Posterior vena cava (tissue), 2 donors: ENCODE measurements at regions of chr1 and their contacts with region 1.

Region 1: DNA sequence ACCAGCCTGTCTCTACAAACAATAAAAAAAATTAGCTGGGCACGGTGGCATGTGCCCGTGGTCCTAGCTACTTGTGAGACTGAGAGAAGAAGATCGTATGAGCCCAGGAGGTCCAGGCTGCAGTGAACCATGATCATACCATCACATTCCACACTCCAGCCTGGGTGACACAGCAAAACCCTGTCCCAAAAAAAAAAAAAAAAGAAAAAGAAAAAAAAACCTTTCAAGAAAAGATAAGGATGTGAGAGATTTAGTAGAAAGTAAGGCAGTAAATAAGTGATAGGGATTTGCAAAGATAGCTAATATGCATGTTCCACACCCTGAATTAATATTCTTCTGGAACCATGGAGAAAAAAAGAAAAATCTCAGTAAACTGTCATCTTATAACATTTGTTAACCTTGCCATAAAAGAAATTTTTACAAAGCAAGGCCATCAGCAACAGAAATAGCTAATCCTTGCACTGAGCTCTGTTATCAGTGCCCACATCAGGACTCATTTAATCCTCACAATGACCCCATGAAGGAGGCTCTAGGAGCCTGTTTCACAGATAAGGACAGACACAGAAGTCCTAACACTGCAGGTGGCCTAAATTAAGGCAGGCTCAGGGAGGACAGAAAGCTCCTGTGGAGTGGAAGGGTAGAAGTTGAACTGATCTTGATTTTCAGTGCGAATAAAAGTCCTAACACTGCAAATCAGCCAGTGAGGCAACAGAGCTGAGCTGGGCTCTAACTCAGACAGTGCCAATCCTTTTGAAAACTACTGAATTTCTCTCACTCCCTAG is 7.6 kb downstream of the GNB1 start:
- DNase-seq: no peak

Region 2: DNA sequence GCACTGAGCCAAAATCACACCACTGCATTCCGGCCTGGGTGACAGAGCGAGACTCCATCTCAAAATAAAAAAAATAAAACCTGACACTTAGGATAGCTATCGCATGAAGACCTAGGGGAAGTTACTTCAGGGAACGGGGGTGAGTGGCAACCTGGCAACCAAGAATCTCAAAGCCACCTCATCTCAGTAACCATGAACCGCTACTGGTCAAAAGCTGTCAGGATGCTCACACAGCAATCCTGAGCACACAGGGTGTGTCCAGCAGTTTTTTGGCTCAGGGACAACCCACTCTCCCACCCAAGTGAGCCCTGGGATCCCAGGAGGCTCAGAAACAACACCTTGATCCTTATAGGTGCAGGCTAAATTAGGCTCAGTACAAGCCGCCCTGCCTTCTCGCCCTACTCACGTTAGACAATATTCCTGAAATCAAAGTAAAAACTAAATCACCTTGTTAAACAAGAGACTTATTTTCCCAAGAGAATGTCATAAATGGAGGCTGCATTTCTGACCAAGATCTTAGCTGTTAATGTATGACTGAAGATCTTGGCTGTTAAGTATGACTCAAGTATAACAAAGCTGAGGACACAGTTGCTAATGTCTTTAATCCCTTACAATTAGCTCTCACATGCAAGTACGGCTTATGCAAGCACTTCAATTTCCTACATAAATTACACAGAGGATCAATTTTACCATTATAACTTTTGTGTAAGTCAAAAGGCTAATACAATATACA is 56.8 kb before region 1 on chr1:
- intact Hi-C with region 1: no loop called
- DNase-seq: no peak

Region 3: DNA sequence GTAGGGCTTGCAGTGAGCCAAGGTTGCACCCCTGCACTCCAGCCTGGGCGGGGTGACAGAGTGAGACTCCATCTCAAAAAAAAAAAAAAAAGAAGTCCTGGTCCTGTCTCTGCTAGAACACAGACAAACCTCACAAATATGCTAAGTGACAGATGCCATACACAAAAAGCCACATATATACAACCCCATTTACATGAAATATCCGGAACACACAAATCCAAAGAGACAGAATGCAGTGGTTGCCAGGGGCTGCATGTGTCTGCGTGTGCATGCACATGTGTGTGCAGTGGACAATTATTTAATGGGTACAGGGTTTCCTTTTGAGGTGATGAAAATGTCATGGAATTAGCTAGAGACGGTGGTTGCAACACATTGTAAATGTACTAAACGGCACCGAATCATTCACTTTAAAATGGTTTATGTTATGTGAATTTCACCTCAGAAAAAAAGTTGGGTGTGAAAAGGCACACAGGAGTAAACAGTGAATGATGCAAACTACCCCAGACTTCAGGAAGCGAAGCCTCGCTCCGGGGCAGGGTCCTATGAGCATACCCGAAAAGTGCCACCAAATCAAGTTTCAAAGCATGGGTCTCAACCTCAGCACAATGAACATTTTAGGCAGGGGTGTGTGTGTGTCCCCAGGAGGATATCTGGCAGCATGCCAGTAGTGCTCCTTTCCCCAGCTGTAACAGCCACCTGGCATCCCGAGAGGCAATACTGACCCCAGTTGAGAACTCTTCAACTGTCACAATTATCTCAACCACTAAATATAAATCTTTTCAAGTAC is 40.7 kb before region 1 on chr1:
- intact Hi-C with region 1: loop called in 1 of 2 experiments (anchors 1 kb)
- DNase-seq: no peak